MCF 10A (cell line): ENCODE measurements at regions of chr11 and their contacts with region 1.

Region 1: DNA sequence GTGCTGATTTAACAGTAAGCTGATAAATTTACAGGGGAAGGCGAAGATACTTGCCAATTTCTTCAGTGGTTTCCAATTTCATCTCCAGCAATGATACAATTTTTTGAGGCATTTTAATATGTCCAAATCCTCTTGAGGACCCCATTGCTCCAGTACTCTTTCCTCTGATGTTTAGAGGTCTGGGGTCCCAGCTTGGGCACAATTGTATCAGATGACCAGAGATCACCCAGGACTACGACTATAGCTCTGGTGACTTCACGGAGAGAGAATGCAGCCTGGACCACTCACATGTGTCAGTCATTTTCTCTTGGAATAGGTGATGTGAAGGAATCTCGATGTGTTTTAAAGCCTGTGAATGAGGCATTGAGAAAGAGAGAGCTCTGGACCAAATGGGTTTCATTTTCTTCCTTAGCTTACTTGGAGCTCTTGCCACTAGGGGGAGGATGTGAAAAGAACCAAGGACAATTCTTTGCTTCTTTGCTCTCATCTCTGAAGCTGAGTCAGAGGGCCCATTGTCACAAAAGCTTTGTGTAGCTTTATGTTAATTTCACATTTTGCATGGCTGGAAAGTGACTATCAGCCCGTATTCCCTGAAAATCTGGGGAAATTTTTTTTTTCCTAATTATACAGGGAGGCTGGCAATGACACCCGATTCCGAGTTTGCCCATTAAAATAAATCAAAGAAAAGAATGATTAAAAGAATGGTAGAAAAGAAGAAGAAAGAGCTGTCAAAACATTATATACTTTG is 6.7 kb upstream of the CCDC90B start:
- DNase-seq: peak; percentile 68
- H3K4me3 Mint-ChIP-seq: peak overlapping the region; percentile 43
- H3K27ac Mint-ChIP-seq: peak overlapping the region; percentile 47
- H3K4me1 Mint-ChIP-seq: peaks cover 4% of the 10 kb centered on the region
- H3K27me3 Mint-ChIP-seq: no peaks in the 10 kb centered on the region
- CTCF ChIP-seq: peak; percentile 64

Region 2: DNA sequence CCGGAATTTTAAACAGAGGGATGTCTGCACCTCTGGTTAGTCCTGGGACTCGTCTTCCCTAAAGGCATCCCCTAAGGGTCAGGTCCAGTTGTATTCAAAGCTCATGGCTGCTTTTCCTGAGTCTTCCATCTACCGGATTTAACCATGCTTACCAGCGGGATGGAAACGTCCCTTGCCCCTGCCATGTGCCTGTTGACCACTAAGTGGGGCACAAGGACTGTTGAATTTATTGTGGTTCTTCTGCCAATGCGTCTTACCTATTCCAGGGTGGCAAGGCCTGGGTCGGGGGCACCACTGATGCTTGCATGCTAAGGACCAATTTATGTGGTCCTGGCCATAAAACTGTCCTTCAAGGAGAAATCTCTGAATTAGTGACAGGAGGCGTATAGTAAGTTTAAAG is 73.8 kb before region 1 on chr11:
- CTCF ChIA-PET with region 1: no interaction called
- POLR2A ChIA-PET with region 1: no interaction called
- intact Hi-C with region 1: no loop called
- DNase-seq: peak; percentile 25
- H3K4me3 Mint-ChIP-seq: no peak overlapping the region
- H3K27ac Mint-ChIP-seq: no peak overlapping the region
- H3K4me1 Mint-ChIP-seq: peaks cover 6% of the 10 kb centered on the region
- H3K27me3 Mint-ChIP-seq: no peaks in the 10 kb centered on the region
- CTCF ChIP-seq: no peak

Region 3: GRCh38 chr11:83241291-83241946 is 51.5 kb before region 1 on chr11:
- CTCF ChIA-PET with region 1: no interaction called
- POLR2A ChIA-PET with region 1: no interaction called
- intact Hi-C with region 1: no loop called
- DNase-seq: peak; percentile 80
- H3K4me3 Mint-ChIP-seq: no peak overlapping the region
- H3K27ac Mint-ChIP-seq: no peak overlapping the region
- H3K4me1 Mint-ChIP-seq: no peaks in the 10 kb centered on the region
- H3K27me3 Mint-ChIP-seq: no peaks in the 10 kb centered on the region
- CTCF ChIP-seq: peak; percentile 47

Region 4: DNA sequence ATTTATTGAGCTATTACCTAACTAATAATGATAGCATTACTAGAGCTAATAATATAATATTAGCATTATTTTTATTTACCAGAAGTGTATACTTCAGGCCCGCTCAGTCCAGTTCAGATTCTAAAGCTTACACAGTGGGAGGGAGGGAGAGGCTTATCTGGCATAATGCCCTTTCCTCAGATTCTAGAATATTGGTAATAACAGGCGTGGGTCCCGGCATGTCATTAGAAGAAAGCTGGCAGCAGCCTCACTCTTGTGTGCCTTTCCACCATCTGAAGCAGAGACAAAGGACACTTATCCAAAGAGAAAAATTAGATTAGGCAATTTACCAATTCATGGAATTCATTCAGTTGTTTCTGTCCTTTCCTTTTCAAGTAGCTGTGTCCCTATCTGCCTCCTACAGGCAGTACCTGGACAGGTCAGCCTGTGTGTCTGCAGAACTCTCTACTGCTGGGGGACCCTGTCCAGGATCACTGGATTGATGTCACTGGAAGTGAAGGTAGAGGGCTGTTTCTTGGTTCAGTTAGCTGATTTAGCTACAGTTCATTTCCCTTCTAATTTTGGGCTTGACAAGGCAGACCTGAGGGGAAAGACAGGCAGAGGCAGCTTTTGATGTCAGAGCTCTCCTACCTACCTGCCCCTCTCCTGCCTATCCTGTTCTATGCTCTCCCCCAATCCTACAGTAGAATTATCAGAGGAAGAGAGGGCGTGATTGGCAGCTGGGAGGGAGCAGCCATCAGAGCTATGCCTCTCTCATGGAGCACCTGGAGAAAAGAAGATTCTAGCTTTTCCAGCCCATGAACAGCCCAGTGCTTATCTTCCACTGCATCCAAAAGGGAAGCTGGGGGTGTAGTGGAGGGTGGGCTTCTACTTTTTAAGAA is 13.6 kb after region 1 on chr11:
- CTCF ChIA-PET with region 1: interaction called, 50 read pairs
- POLR2A ChIA-PET with region 1: no interaction called
- intact Hi-C with region 1: no loop called
- DNase-seq: no peak
- H3K4me3 Mint-ChIP-seq: no peak overlapping the region
- H3K27ac Mint-ChIP-seq: no peak overlapping the region
- H3K4me1 Mint-ChIP-seq: no peaks in the 10 kb centered on the region
- H3K27me3 Mint-ChIP-seq: peaks cover 6% of the 10 kb centered on the region
- CTCF ChIP-seq: no peak

Region 5: DNA sequence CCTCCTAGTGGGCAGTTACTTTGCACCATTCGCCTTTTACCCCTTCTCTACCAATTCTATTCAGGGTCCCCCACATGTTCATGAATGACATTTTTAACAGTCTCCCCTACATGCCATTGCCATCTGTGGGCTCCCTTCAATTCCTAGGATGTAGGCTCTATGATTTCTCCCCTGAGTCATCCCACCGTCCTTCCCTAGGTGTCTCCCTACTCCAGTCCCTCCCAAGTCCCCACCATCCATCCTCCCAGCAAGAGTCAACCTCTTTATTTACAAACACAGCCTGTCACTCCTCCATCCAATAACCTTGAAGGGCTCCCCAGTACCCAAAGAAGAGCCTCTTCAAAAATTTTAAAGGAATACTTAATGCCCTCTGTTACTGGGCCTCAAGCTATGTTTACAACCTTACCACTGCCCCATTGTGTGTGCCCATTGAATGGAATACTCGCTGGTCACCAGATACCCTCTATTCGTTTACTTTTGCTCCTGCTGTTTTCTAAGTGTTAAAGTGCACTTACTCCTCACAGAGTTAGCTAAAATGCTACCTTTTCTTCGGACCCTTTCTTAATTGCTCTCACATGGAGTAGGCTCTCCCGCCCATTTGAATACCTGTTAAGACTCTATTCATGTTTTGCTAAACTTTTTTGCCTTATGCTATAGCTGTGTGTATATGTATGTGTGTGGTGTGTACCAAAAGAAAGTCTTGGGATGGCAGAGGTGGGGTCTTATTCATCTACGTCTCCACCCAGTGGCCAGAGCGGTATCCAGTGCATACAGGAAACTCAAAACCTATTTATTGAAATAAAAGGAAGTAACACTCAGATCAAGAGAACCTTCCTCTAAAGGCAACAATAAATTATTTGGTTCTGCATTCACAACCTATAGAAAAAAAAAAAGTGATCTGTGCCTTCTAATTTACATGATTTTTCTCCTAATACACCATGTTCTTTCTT is 229.0 kb after region 1 on chr11:
- CTCF ChIA-PET with region 1: interaction called, 11 read pairs
- POLR2A ChIA-PET with region 1: no interaction called
- intact Hi-C with region 1: loop called (anchors 10 kb)
- DNase-seq: peak; percentile 27
- H3K4me3 Mint-ChIP-seq: no peak overlapping the region
- H3K27ac Mint-ChIP-seq: no peak overlapping the region
- H3K4me1 Mint-ChIP-seq: no peaks in the 10 kb centered on the region
- H3K27me3 Mint-ChIP-seq: peaks cover 10% of the 10 kb centered on the region
- CTCF ChIP-seq: no peak

Region 6: GRCh38 chr11:83574516-83574915 is 281.6 kb after region 1 on chr11:
- CTCF ChIA-PET with region 1: no interaction called
- POLR2A ChIA-PET with region 1: no interaction called
- intact Hi-C with region 1: no loop called
- DNase-seq: no peak
- H3K4me3 Mint-ChIP-seq: no peak overlapping the region
- H3K27ac Mint-ChIP-seq: no peak overlapping the region
- H3K4me1 Mint-ChIP-seq: no peaks in the 10 kb centered on the region
- H3K27me3 Mint-ChIP-seq: peaks cover 33% of the 10 kb centered on the region
- CTCF ChIP-seq: no peak

Region 7: GRCh38 chr11:83724008-83724461 is 431.2 kb after region 1 on chr11:
- CTCF ChIA-PET with region 1: interaction called, 17 read pairs
- POLR2A ChIA-PET with region 1: no interaction called
- intact Hi-C with region 1: loop called (anchors 1 kb)
- DNase-seq: peak; percentile 54
- H3K4me3 Mint-ChIP-seq: peak overlapping the region; percentile 51
- H3K27ac Mint-ChIP-seq: no peak overlapping the region
- H3K4me1 Mint-ChIP-seq: peaks cover 5% of the 10 kb centered on the region
- H3K27me3 Mint-ChIP-seq: peaks cover 53% of the 10 kb centered on the region
- CTCF ChIP-seq: peak; percentile 38

Region 8: GRCh38 chr11:83819933-83820549 is 527.2 kb after region 1 on chr11:
- CTCF ChIA-PET with region 1: interaction called, 383 read pairs
- POLR2A ChIA-PET with region 1: interaction called, 10 read pairs
- intact Hi-C with region 1: loop called (anchors 1 kb)
- DNase-seq: peak; percentile 68
- H3K4me3 Mint-ChIP-seq: no peak overlapping the region
- H3K27ac Mint-ChIP-seq: no peak overlapping the region
- H3K4me1 Mint-ChIP-seq: no peaks in the 10 kb centered on the region
- H3K27me3 Mint-ChIP-seq: peaks cover 27% of the 10 kb centered on the region
- CTCF ChIP-seq: peak; percentile 58